ENCODE measurements at regions of chr9 and their contacts with region 1.

Region 1: GRCh38 chr9:114108016-114108833 is 9.1 kb upstream of the KIF12 start:
- DNase-seq: peak; percentile 76
- H3K4me3 Mint-ChIP-seq: no peak overlapping the region
- H3K27ac Mint-ChIP-seq: no peak overlapping the region
- H3K4me1 Mint-ChIP-seq: peaks cover 6% of the 10 kb centered on the region
- H3K27me3 Mint-ChIP-seq: peaks cover 78% of the 10 kb centered on the region
- CTCF ChIP-seq: peak; percentile 91

Region 2: GRCh38 chr9:113624721-113625120 is 483.5 kb before region 1 on chr9:
- CTCF ChIA-PET with region 1: no interaction called
- POLR2A ChIA-PET with region 1: no interaction called
- intact Hi-C with region 1: no loop called
- DNase-seq: no peak
- H3K4me3 Mint-ChIP-seq: no peak overlapping the region
- H3K27ac Mint-ChIP-seq: no peak overlapping the region
- H3K4me1 Mint-ChIP-seq: no peaks in the 10 kb centered on the region
- H3K27me3 Mint-ChIP-seq: no peaks in the 10 kb centered on the region
- CTCF ChIP-seq: no peak

Region 3: DNA sequence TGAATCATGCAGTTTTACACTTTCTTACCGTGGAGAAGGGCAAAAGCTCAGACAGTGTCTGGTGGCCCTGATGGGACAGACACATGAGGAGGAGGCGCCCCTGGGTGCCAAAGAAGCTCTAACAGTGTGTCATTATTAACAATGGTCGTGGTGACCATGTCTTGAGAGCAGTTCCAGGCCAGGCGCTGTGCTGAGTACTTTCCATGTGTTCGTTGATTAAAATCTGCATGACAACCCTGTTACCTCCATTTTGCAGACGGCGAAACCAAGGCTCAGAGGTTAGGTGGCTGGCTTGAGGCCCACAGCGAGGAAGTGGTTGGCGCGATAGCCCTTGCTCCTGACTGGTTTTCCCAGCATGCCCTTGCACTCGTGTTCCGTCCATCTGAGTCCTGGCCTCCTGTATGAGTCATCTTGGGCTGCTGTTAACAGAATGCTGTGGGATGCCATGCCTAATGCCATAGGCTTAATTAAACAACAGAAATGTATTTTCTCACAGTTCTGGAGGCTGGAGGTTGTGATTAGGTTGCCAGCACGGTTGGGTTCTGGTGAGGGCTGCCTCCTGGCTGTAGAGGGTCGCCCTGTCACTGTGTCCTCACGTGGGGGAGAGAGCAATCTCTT is 122.1 kb before region 1 on chr9:
- CTCF ChIA-PET with region 1: no interaction called
- POLR2A ChIA-PET with region 1: no interaction called
- intact Hi-C with region 1: no loop called
- DNase-seq: no peak
- H3K4me3 Mint-ChIP-seq: no peak overlapping the region
- H3K27ac Mint-ChIP-seq: no peak overlapping the region
- H3K4me1 Mint-ChIP-seq: peaks cover 4% of the 10 kb centered on the region
- H3K27me3 Mint-ChIP-seq: no peaks in the 10 kb centered on the region
- CTCF ChIP-seq: no peak

Region 4: DNA sequence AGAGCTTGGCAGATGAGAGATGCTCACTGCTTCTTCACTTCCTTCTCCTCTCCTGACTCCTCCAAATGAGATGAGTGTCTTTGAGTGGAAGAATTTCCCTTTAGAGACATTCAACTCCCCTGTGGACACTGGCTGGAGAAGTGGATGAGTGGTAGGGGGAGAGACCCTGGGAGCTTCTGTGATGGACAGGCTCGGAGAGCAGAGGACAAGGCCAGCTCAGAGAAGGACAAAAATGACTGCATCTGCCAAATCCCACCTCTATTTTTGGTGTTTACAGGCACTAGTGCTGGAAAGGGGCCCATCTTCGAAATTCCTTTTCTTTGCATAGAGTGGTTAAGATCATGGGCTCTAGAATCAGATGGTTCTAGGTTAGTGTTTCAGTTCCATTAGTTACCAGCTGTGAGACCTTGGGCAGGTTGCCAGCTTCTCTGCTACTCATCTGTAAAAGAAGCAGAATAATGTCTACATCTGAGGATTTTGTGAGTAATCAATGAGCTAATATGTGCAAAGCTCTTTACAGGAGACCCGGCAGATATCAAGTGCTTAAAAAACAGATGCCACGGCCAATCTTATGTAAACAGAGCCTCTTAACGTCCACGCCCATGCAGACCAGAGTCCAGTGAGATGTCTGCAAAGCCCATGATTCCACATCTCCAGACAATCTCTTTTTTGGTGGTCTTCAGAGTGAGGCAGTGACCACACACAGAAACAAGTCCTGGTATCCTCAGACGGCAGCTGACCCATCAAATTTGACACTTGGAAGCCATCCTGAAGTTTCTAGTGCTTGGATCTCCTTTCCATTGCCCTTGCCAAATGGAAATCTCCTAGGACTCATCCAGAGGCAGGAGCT is 33.6 kb after region 1 on chr9:
- CTCF ChIA-PET with region 1: interaction called, 17 read pairs
- POLR2A ChIA-PET with region 1: no interaction called
- intact Hi-C with region 1: no loop called
- DNase-seq: no peak
- H3K4me3 Mint-ChIP-seq: no peak overlapping the region
- H3K27ac Mint-ChIP-seq: no peak overlapping the region
- H3K4me1 Mint-ChIP-seq: no peaks in the 10 kb centered on the region
- H3K27me3 Mint-ChIP-seq: peaks cover 49% of the 10 kb centered on the region
- CTCF ChIP-seq: no peak

Region 5: GRCh38 chr9:114155263-114155972 is 47.2 kb after region 1 on chr9 and contains the start of gene COL27A1:
- CTCF ChIA-PET with region 1: interaction called, 20 read pairs
- POLR2A ChIA-PET with region 1: no interaction called
- intact Hi-C with region 1: loop called (anchors 10 kb)
- DNase-seq: peak; percentile 77
- H3K4me3 Mint-ChIP-seq: peak within 1 kb of the TSS; percentile 70
- H3K27ac Mint-ChIP-seq: no peak within 1 kb of the TSS
- H3K4me1 Mint-ChIP-seq: peaks cover 7% of the 10 kb centered on the region
- H3K27me3 Mint-ChIP-seq: peaks cover 47% of the 10 kb centered on the region
- CTCF ChIP-seq: peak; percentile 93
- total RNA-seq, gene COL27A1: 1.3 and 2.9 TPM in 2 replicates

Region 6: GRCh38 chr9:114285166-114285867 is 177.1 kb after region 1 on chr9:
- CTCF ChIA-PET with region 1: interaction called, 160 read pairs
- POLR2A ChIA-PET with region 1: no interaction called
- intact Hi-C with region 1: no loop called
- DNase-seq: peak; percentile 68
- H3K4me3 Mint-ChIP-seq: no peak overlapping the region
- H3K27ac Mint-ChIP-seq: no peak overlapping the region
- H3K4me1 Mint-ChIP-seq: peaks cover 30% of the 10 kb centered on the region
- H3K27me3 Mint-ChIP-seq: no peaks in the 10 kb centered on the region
- CTCF ChIP-seq: no peak

Region 7: GRCh38 chr9:114304416-114305188 is 196.4 kb after region 1 on chr9:
- CTCF ChIA-PET with region 1: interaction called, 5 read pairs
- POLR2A ChIA-PET with region 1: no interaction called
- intact Hi-C with region 1: loop called (anchors 1 kb)
- DNase-seq: no peak
- H3K4me3 Mint-ChIP-seq: no peak overlapping the region
- H3K27ac Mint-ChIP-seq: no peak overlapping the region
- H3K4me1 Mint-ChIP-seq: no peaks in the 10 kb centered on the region
- H3K27me3 Mint-ChIP-seq: no peaks in the 10 kb centered on the region
- CTCF ChIP-seq: no peak

Measured in MCF 10A (cell line).